Posterior vena cava (tissue), 2 donors: ENCODE measurements at regions of chr18 and their contacts with region 1.

Region 1: GRCh38 chr18:24827501-24827900 is 367.1 kb downstream of the HRH4 start:
- DNase-seq: no peak

Region 2: GRCh38 chr18:25125680-25126079 is 298.2 kb after region 1 on chr18:
- intact Hi-C with region 1: no loop called
- DNase-seq: no peak

Region 3: DNA sequence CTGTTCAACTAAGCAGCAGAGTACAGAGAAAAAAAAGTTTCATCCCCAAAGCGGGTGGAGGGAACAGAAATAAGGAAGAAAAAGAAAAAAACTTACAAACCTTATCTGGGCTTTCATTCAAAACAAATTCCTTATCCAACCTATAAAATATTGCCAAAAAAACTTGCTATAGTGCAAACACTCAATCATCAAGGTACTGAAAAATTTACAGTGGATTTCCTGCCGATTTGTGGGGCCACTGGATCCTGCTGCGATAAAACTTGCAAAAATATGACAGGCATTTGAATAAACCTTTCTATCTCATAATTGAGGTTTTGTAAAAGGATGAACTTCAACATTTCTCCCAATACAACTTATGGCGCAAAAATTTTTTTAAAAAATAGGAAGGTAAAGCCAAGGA is 447.4 kb after region 1 on chr18:
- intact Hi-C with region 1: loop called in 1 of 2 experiments (anchors 5 kb)
- DNase-seq: no peak